ENCODE measurements at regions of chr7 and their contacts with region 1.

Region 1: GRCh38 chr7:35801392-35802101 is 690 bp downstream of the SEPTIN7 start:
- DNase-seq: peak; percentile 85 to 91
- ATAC-seq: peak; percentile 66
- H3K4me3 ChIP-seq: peak overlapping the region; percentile 66 to 69
- H3K27ac ChIP-seq: peak overlapping the region; percentile 65 to 74
- H3K4me1 ChIP-seq: peaks cover 0 to 4% of the 10 kb centered on the region in 2 donors
- H3K27me3 ChIP-seq: no peaks in the 10 kb centered on the region

Region 2: DNA sequence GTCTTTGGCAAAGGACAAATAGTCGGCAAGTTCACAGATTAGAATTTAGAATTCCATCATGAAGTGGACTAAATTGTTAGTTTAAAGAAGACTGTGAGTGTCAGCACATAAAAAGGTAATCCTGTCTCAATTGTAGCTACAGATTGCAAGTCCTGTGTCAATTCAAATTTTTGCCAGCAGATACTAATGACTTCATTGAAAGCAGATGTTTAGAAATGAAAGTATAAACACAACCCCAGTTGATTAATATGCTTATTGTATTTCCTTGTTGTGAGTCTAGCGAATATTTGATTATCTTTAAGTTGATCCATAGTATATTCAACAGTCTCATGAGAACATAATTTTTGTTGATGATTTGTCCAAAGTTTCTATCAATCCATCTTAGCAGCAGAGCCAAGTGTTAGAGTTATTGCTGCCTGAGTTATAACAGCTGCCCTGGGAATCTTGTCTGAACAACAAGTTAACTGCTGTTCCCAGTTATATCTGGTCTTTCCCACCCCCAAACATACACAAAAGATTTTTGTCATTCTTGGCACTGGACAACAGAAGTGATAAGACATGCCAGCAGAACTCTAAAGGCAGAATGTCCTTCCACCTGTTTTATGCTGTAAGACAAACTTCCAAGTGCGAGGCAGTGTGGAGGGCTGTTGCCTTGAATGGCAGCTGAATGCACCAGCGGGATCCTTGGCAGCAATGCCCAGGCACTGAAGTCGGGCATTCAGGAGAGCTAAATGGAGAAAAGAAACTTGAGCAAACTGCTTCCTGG is 85.3 kb before region 1 on chr7:
- intact Hi-C with region 1: loop called (anchors 5 to 10 kb)
- DNase-seq: peak in 1 of 2 donors; percentile 77
- ATAC-seq: peak; percentile 65
- H3K4me3 ChIP-seq: no peak overlapping the region
- H3K27ac ChIP-seq: peak overlapping the region in 1 of 2 donors; percentile 78
- H3K4me1 ChIP-seq: peaks cover 0 to 5% of the 10 kb centered on the region in 2 donors
- H3K27me3 ChIP-seq: no peaks in the 10 kb centered on the region

Region 3: DNA sequence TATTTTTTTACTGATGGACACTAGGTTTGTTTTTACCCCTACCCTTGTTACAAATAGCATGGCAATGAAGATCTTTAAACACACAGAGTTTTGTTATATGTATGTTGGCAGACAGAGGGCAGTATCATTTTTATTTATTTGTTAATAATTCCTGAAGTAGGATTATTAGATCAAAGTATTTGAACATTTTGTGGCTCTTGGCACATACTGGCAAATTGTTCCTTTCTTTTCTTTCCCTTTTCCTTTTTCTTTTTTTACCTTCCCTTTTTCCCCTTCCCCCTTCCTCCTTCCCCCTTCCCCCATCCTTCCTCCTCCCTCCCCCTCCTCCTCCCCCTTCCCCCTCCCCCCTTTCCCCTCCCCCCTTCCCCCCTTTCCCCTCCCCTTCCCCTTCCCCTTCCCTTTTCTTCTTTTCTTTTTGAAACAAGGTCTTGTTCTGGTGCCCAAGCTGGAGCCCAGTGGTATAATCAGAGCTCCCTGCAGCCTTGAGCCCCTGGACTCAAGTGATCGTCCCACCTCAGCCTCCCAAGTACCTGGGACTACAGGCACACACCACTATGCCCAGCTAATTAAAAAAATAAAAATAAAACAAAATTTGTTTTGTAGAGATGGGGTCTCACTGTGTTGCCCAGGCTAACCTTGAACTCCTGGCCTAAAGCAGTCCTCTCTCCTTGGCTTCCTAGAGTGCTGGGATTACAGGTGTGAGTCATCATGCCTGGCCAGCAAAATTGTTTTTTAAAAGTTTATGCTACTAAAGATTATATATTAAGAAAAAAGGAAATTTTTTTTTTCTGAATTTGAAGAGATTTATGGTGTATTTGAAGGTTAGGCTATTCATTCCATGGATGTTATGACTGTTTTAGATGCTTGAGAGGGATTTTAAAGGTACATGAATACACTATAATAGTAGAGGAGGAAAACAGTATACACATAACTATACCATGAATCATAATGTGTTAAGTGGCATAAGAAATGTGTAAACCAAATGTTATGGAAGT is 38.6 kb after region 1 on chr7:
- intact Hi-C with region 1: loop called in 1 of 2 experiments (anchors 5 kb)
- DNase-seq: no peak
- ATAC-seq: no peak
- H3K4me3 ChIP-seq: no peak overlapping the region
- H3K27ac ChIP-seq: no peak overlapping the region
- H3K4me1 ChIP-seq: no peaks in the 10 kb centered on the region
- H3K27me3 ChIP-seq: no peaks in the 10 kb centered on the region

Region 4: GRCh38 chr7:36115448-36116321 is 314.1 kb after region 1 on chr7:
- intact Hi-C with region 1: loop called in 1 of 2 experiments (anchors 10 kb)
- DNase-seq: peak; percentile 91 to 96
- ATAC-seq: peak; percentile 61
- H3K4me3 ChIP-seq: no peak overlapping the region
- H3K27ac ChIP-seq: peak overlapping the region; percentile 61 to 100
- H3K4me1 ChIP-seq: peaks cover 5 to 9% of the 10 kb centered on the region in 2 donors
- H3K27me3 ChIP-seq: no peaks in the 10 kb centered on the region